B cell (primary cell): ENCODE measurements at regions of chr17 and their contacts with region 1.

Region 1: GRCh38 chr17:19766422-19767270 is 18.5 kb upstream of the ALDH3A1 start:
- DNase-seq: peak; percentile 80
- ATAC-seq: peak; percentile 88
- H3K4me3 ChIP-seq: no peak overlapping the region
- H3K4me3 Mint-ChIP-seq: no peak overlapping the region
- H3K27ac ChIP-seq: no peak overlapping the region
- H3K27ac Mint-ChIP-seq: peak overlapping the region; percentile 50
- H3K4me1 ChIP-seq: peaks cover 0 to 7% of the 10 kb centered on the region in 2 donors
- H3K4me1 Mint-ChIP-seq: no peaks in the 10 kb centered on the region
- H3K27me3 ChIP-seq: no peaks in the 10 kb centered on the region
- H3K27me3 Mint-ChIP-seq: no peaks in the 10 kb centered on the region
- CTCF ChIP-seq: peak; percentile 97

Region 2: DNA sequence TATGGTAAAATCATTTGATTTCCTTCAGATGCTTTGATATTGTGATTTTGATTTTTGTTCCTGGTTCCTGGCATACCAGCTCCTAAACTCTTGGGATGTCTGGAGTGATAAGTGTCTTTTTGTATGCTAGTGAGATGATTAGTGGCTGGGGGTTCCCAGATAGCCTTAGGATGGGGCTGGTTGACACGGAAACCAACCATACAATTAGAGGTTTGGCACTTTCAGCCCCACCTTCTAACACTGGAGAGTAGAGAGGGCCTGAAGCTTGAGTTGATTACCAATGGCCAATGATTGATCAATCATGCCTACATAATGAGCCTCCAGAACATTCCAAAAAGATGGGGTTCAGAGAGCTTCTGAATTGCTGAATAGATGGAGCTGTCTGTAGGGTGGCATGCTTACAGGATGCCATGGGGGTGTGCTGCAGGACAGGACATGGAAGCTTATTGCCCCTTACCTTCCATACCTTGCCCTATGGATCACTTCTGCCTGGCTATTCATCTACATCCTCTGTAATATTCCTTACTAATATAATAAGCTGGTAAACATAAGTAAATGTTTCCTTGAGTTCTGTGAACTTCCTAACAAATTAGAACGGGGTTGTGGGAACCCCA is 332.8 kb before region 1 on chr17:
- CTCF ChIA-PET with region 1: interaction called, 22 read pairs
- POLR2A ChIA-PET with region 1: no interaction called
- intact Hi-C with region 1: no loop called
- DNase-seq: peak; percentile 20
- ATAC-seq: no peak
- H3K4me3 ChIP-seq: no peak overlapping the region
- H3K4me3 Mint-ChIP-seq: no peak overlapping the region
- H3K27ac ChIP-seq: no peak overlapping the region
- H3K27ac Mint-ChIP-seq: no peak overlapping the region
- H3K4me1 ChIP-seq: no peaks in the 10 kb centered on the region
- H3K4me1 Mint-ChIP-seq: no peaks in the 10 kb centered on the region
- H3K27me3 ChIP-seq: peaks cover 0 to 2% (median 0%) of the 10 kb centered on the region in 4 experiments
- H3K27me3 Mint-ChIP-seq: peaks cover 3% of the 10 kb centered on the region
- CTCF ChIP-seq: peak; percentile 12

Region 3: GRCh38 chr17:19513897-19514488 is 252.7 kb before region 1 on chr17:
- CTCF ChIA-PET with region 1: interaction called, 285 read pairs
- POLR2A ChIA-PET with region 1: no interaction called
- intact Hi-C with region 1: loop called (anchors 1 kb)
- DNase-seq: peak; percentile 82
- ATAC-seq: peak; percentile 75
- H3K4me3 ChIP-seq: no peak overlapping the region
- H3K4me3 Mint-ChIP-seq: peak overlapping the region; percentile 35
- H3K27ac ChIP-seq: no peak overlapping the region
- H3K27ac Mint-ChIP-seq: no peak overlapping the region
- H3K4me1 ChIP-seq: peaks cover 0 to 5% of the 10 kb centered on the region in 2 donors
- H3K4me1 Mint-ChIP-seq: peaks cover 6% of the 10 kb centered on the region
- H3K27me3 ChIP-seq: no peaks in the 10 kb centered on the region
- H3K27me3 Mint-ChIP-seq: no peaks in the 10 kb centered on the region
- CTCF ChIP-seq: peak; percentile 94

Region 4: GRCh38 chr17:19614900-19615299 is 151.7 kb before region 1 on chr17:
- CTCF ChIA-PET with region 1: interaction called, 17 read pairs
- POLR2A ChIA-PET with region 1: no interaction called
- intact Hi-C with region 1: no loop called
- DNase-seq: no peak
- ATAC-seq: no peak
- H3K4me3 ChIP-seq: no peak overlapping the region
- H3K4me3 Mint-ChIP-seq: no peak overlapping the region
- H3K27ac ChIP-seq: no peak overlapping the region
- H3K27ac Mint-ChIP-seq: no peak overlapping the region
- H3K4me1 ChIP-seq: no peaks in the 10 kb centered on the region
- H3K4me1 Mint-ChIP-seq: peaks cover 3% of the 10 kb centered on the region
- H3K27me3 ChIP-seq: peaks cover 0 to 3% (median 0%) of the 10 kb centered on the region in 4 experiments
- H3K27me3 Mint-ChIP-seq: no peaks in the 10 kb centered on the region
- CTCF ChIP-seq: no peak

Region 5: GRCh38 chr17:19648475-19649406 is 117.9 kb before region 1 on chr17 and contains the start of gene ALDH3A2:
- CTCF ChIA-PET with region 1: interaction called, 22 read pairs
- POLR2A ChIA-PET with region 1: no interaction called
- intact Hi-C with region 1: loop called (anchors 2 kb)
- DNase-seq: peak; percentile 92
- ATAC-seq: peak; percentile 94
- H3K4me3 ChIP-seq: peak within 1 kb of the TSS; percentile 35 to 95 (median 83)
- H3K4me3 Mint-ChIP-seq: peak within 1 kb of the TSS; percentile 98
- H3K27ac ChIP-seq: peak within 1 kb of the TSS; percentile 72 to 76
- H3K27ac Mint-ChIP-seq: peak within 1 kb of the TSS; percentile 97
- H3K4me1 ChIP-seq: peaks cover 16 to 19% of the 10 kb centered on the region in 2 donors
- H3K4me1 Mint-ChIP-seq: peaks cover 35% of the 10 kb centered on the region
- H3K27me3 ChIP-seq: no peaks in the 10 kb centered on the region
- H3K27me3 Mint-ChIP-seq: peaks cover 4% of the 10 kb centered on the region
- CTCF ChIP-seq: no peak
- total RNA-seq, gene ALDH3A2: 31.5 and 35.1 TPM in 2 replicates

Region 6: GRCh38 chr17:19712436-19713004 is 54.1 kb before region 1 on chr17:
- CTCF ChIA-PET with region 1: no interaction called
- POLR2A ChIA-PET with region 1: no interaction called
- intact Hi-C with region 1: no loop called
- DNase-seq: no peak
- ATAC-seq: no peak
- H3K4me3 ChIP-seq: no peak overlapping the region
- H3K4me3 Mint-ChIP-seq: no peak overlapping the region
- H3K27ac ChIP-seq: no peak overlapping the region
- H3K27ac Mint-ChIP-seq: no peak overlapping the region
- H3K4me1 ChIP-seq: no peaks in the 10 kb centered on the region
- H3K4me1 Mint-ChIP-seq: no peaks in the 10 kb centered on the region
- H3K27me3 ChIP-seq: no peaks in the 10 kb centered on the region
- H3K27me3 Mint-ChIP-seq: no peaks in the 10 kb centered on the region
- CTCF ChIP-seq: no peak

Region 7: DNA sequence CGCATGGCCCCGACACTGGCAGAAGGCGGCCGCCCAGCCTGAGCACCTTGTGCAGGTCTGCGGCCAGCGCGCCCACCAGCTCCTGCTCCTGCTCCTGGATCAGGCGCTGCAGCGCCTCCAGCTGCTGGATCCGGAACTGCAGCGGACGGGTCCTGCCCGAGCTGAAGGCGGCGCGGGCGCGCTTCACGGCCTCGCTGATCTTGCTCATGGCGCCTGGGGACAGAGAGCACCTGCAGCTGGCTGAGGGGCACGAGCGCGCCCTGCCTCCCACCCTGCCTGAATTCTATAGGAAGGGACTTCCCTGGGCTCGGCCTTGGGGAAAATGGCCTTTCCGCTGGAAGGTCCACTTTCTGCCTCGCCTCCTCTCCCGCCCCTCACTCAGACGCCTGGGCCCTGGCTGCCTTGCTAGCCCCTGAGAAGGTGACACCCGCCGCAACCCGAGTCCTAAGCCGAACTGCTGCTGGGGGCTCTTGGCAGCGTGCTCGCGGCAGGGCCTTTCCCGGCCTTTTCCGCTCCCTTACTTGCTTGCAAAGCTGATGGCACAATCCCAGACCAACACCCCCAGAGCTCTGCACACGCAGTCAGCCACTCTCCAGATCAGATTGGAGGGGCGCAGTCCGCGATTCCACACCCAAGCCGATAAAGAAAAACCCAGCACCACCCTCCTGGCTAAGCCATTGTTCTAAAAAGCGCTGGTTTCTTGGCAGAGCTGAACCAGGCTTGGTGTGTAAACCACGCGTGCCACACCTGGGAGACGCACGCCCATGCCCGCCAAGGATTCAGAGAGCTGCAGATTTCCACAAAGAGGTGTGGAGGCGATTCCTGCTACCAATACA is 21.5 kb before region 1 on chr17:
- CTCF ChIA-PET with region 1: interaction called, 37 read pairs
- POLR2A ChIA-PET with region 1: no interaction called
- intact Hi-C with region 1: no loop called
- DNase-seq: peak; percentile 82
- ATAC-seq: peak; percentile 93
- H3K4me3 ChIP-seq: peak overlapping the region in 3 of 5 experiments; percentile 41 to 50 (median 49)
- H3K4me3 Mint-ChIP-seq: peak overlapping the region; percentile 69
- H3K27ac ChIP-seq: no peak overlapping the region
- H3K27ac Mint-ChIP-seq: no peak overlapping the region
- H3K4me1 ChIP-seq: peaks cover 6 to 9% of the 10 kb centered on the region in 2 donors
- H3K4me1 Mint-ChIP-seq: peaks cover 6% of the 10 kb centered on the region
- H3K27me3 ChIP-seq: peaks cover 0 to 12% (median 2%) of the 10 kb centered on the region in 4 experiments
- H3K27me3 Mint-ChIP-seq: peaks cover 5% of the 10 kb centered on the region
- CTCF ChIP-seq: peak; percentile 84

Region 8: GRCh38 chr17:19753049-19753444 is 13.6 kb before region 1 on chr17:
- CTCF ChIA-PET with region 1: interaction called, 32 read pairs
- POLR2A ChIA-PET with region 1: no interaction called
- intact Hi-C with region 1: no loop called
- DNase-seq: no peak
- ATAC-seq: no peak
- H3K4me3 ChIP-seq: no peak overlapping the region
- H3K4me3 Mint-ChIP-seq: no peak overlapping the region
- H3K27ac ChIP-seq: no peak overlapping the region
- H3K27ac Mint-ChIP-seq: no peak overlapping the region
- H3K4me1 ChIP-seq: peaks cover 19 to 31% of the 10 kb centered on the region in 2 donors
- H3K4me1 Mint-ChIP-seq: peaks cover 41% of the 10 kb centered on the region
- H3K27me3 ChIP-seq: no peaks in the 10 kb centered on the region
- H3K27me3 Mint-ChIP-seq: peaks cover 5% of the 10 kb centered on the region
- CTCF ChIP-seq: no peak